ENCODE measurements at regions of chr15 and their contacts with region 1.

Region 1: DNA sequence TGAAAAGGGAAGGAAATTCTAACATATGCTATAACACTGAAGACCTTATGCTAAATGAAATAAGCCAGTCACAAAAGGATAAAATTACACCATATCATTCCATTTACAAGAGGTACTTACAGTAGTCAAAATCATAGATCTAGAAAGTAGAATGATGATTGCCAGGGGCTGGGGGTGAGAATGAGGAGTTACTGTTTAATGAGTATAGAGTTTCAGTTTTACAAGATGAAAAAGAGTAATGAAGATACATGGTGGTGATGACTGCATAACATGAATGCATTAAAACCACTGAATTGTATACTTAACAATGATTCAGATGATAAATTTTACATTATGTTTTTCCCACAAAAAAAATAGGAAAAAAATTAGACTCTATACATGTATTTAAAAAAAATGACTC is 152.6 kb downstream of the SCAPER start:
- DNase-seq: peak; percentile 37
- H3K4me3 Mint-ChIP-seq: no peak overlapping the region
- H3K27ac Mint-ChIP-seq: no peak overlapping the region
- H3K4me1 Mint-ChIP-seq: peaks cover 11% of the 10 kb centered on the region
- H3K27me3 Mint-ChIP-seq: no peaks in the 10 kb centered on the region

Region 2: GRCh38 chr15:76382987-76383728 is 369.4 kb before region 1 on chr15:
- CTCF ChIA-PET with region 1: no interaction called
- POLR2A ChIA-PET with region 1: no interaction called
- intact Hi-C with region 1: loop called (anchors 1 kb)
- DNase-seq: no peak
- H3K4me3 Mint-ChIP-seq: no peak overlapping the region
- H3K27ac Mint-ChIP-seq: no peak overlapping the region
- H3K4me1 Mint-ChIP-seq: peaks cover 8% of the 10 kb centered on the region
- H3K27me3 Mint-ChIP-seq: no peaks in the 10 kb centered on the region

Region 3: GRCh38 chr15:76648732-76649444 is 103.7 kb before region 1 on chr15:
- CTCF ChIA-PET with region 1: no interaction called
- POLR2A ChIA-PET with region 1: no interaction called
- intact Hi-C with region 1: loop called (anchors 1 kb)
- DNase-seq: no peak
- H3K4me3 Mint-ChIP-seq: no peak overlapping the region
- H3K27ac Mint-ChIP-seq: no peak overlapping the region
- H3K4me1 Mint-ChIP-seq: peaks cover 6% of the 10 kb centered on the region
- H3K27me3 Mint-ChIP-seq: no peaks in the 10 kb centered on the region

Region 4: GRCh38 chr15:76776480-76776879 is 23.9 kb after region 1 on chr15:
- CTCF ChIA-PET with region 1: no interaction called
- POLR2A ChIA-PET with region 1: no interaction called
- intact Hi-C with region 1: no loop called
- DNase-seq: no peak
- H3K4me3 Mint-ChIP-seq: no peak overlapping the region
- H3K27ac Mint-ChIP-seq: no peak overlapping the region
- H3K4me1 Mint-ChIP-seq: peaks cover 9% of the 10 kb centered on the region
- H3K27me3 Mint-ChIP-seq: no peaks in the 10 kb centered on the region